Colonic mucosa (tissue), 4 donors: ENCODE measurements at regions of chr11 and their contacts with region 1.

Region 1: GRCh38 chr11:131867457-131868257 is 497.2 kb downstream of the NTM start:
- DNase-seq: peak; percentile 46
- H3K4me3 ChIP-seq: no peak overlapping the region
- H3K27ac ChIP-seq: no peak overlapping the region
- H3K4me1 ChIP-seq: no peaks in the 10 kb centered on the region
- H3K27me3 ChIP-seq: no peaks in the 10 kb centered on the region
- CTCF ChIP-seq: peak; percentile 45

Region 2: GRCh38 chr11:132032555-132032954 is 164.9 kb after region 1 on chr11:
- intact Hi-C with region 1: loop called (anchors 5 kb)
- DNase-seq: no peak
- H3K4me3 ChIP-seq: no peak overlapping the region
- H3K27ac ChIP-seq: no peak overlapping the region
- H3K4me1 ChIP-seq: no peaks in the 10 kb centered on the region
- H3K27me3 ChIP-seq: no peaks in the 10 kb centered on the region
- CTCF ChIP-seq: no peak

Region 3: DNA sequence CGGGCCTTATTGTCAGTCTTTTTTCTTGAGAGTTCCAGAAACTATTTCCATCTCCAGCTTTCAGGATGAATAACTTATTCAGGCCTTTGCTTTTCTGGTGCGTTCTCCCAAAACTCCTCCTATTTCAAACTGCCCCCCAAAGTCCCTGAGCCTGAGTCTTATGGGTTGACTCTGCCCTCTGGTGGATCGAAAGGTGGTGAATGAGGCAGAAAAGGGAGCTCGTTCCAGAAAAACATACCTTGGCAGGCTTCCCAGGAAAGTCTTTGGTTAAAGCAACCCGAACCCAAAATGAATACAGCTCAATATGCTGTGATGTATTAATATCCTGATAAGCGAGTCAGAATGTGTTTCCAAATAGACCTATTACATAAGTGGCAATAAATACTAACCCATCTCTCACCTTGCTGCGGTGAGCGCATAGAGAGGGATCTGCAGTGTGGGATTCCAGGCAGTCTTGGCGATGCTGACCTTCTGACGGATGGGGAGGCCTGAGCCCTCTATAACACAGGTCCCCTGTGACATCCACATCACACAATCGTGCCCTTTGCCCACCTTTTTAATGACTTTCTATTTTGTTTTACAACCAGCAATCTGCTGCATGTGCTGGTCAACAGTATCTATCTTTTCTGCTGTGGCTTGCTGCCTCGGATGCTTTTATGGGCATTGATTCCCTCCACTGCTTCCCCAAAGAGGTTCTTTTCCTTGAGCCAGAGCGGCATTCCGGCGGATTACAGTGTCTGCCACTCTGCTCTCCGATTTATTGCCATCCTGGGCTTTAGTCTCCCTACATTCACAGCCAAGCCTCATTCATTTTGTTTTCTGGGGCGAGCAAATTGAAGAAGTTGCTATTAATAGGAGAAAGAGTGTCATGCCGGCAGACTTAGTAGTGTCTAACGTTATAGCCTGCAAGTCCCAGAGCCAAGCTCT is 259.6 kb after region 1 on chr11:
- intact Hi-C with region 1: loop called (anchors 10 kb)
- DNase-seq: peak; percentile 45
- H3K4me3 ChIP-seq: peak overlapping the region; percentile 12
- H3K27ac ChIP-seq: no peak overlapping the region
- H3K4me1 ChIP-seq: no peaks in the 10 kb centered on the region
- H3K27me3 ChIP-seq: no peaks in the 10 kb centered on the region
- CTCF ChIP-seq: no peak

Region 4: DNA sequence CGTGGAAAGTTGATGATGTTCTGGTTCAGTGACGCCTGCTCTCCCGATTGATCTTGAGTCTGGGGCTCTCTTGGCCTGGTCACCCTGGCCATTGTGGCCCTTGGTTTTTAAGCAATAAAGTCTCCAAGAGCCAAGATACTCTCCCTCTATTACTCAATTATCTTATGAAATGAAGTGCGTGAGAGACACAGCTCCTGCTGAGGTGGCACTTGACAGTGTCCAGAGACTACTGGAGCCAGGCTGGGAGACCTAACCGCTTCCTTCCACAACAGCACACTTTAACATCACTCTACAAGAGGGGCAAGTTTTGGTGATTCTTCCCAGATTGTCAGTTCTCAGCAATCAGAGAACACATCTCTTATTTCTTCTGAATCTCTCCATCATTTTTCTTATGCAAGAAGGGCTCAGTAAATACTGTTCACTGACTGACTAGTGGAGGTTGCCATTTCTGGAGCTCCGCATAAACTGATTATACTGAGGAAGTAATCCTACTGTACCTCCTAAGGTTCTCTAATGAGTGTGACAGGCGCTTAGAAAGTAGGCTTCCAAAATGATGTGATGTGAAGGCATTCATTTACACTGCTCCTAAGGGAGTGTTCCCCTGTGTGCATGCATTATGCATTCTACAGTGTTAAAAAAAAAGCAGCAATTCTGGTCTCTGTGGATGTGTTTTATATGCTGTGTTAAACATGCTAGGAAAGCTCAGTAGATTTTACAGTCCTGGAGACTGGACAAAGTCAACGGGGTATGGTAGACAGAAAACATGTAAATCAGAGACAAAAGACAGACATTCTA is 696.6 kb after region 1 on chr11:
- intact Hi-C with region 1: no loop called
- DNase-seq: no peak
- H3K4me3 ChIP-seq: no peak overlapping the region
- H3K27ac ChIP-seq: no peak overlapping the region
- H3K4me1 ChIP-seq: no peaks in the 10 kb centered on the region
- H3K27me3 ChIP-seq: no peaks in the 10 kb centered on the region
- CTCF ChIP-seq: no peak

Region 5: GRCh38 chr11:132714859-132715440 is 847.3 kb after region 1 on chr11:
- intact Hi-C with region 1: no loop called
- DNase-seq: no peak
- H3K4me3 ChIP-seq: no peak overlapping the region
- H3K27ac ChIP-seq: no peak overlapping the region
- H3K4me1 ChIP-seq: no peaks in the 10 kb centered on the region
- H3K27me3 ChIP-seq: no peaks in the 10 kb centered on the region
- CTCF ChIP-seq: no peak